Caco-2 (cell line): ENCODE measurements at regions of chr3 and their contacts with region 1.

Region 1: GRCh38 chr3:19946832-19947548 is at the start of gene RAB5A:
- DNase-seq: peak; percentile 97
- H3K4me3 ChIP-seq: peak within 1 kb of the TSS; percentile 96
- H3K4me3 Mint-ChIP-seq: peak within 1 kb of the TSS; percentile 80
- H3K27ac Mint-ChIP-seq: peak within 1 kb of the TSS; percentile 86
- H3K4me1 ChIP-seq: peaks cover 12% of the 10 kb centered on the region
- H3K4me1 Mint-ChIP-seq: peaks cover 6% of the 10 kb centered on the region
- H3K27me3 ChIP-seq: no peaks in the 10 kb centered on the region
- H3K27me3 Mint-ChIP-seq: no peaks in the 10 kb centered on the region
- CTCF ChIP-seq: no peak
- total RNA-seq, gene RAB5A: 63.1 and 69.5 TPM in 2 replicates

Region 2: DNA sequence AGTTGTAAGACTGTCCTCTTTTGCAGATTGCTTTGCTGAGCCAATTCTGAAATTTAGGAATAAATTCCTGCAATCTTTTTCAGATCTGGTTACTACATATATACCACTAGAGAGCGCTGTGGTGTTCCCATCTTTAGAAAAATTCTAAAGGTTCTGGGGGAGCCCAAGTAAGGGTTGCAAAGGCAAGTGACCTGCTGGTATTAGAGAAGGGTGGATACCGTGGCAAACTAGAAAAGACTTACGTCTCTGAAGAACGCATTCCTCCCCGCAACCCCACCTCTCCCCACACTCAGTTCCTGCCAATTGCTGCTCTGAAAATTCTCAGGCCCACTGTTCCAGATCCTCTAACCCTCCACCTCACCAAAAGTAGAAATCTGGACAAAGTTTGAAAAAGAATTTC is 61.5 kb before region 1 on chr3:
- CTCF ChIA-PET with region 1: no interaction called
- POLR2A ChIA-PET with region 1: no interaction called
- intact Hi-C with region 1: loop called (anchors 1 kb)
- DNase-seq: peak in 1 of 2 experiments; percentile 28
- H3K4me3 ChIP-seq: no peak overlapping the region
- H3K4me3 Mint-ChIP-seq: no peak overlapping the region
- H3K27ac Mint-ChIP-seq: no peak overlapping the region
- H3K4me1 ChIP-seq: no peaks in the 10 kb centered on the region
- H3K4me1 Mint-ChIP-seq: no peaks in the 10 kb centered on the region
- H3K27me3 ChIP-seq: no peaks in the 10 kb centered on the region
- H3K27me3 Mint-ChIP-seq: no peaks in the 10 kb centered on the region
- CTCF ChIP-seq: peak; percentile 40 to 65

Region 3: GRCh38 chr3:19898721-19899120 is 48.3 kb before region 1 on chr3:
- CTCF ChIA-PET with region 1: no interaction called
- POLR2A ChIA-PET with region 1: no interaction called
- intact Hi-C with region 1: loop called (anchors 2 kb)
- DNase-seq: no peak
- H3K4me3 ChIP-seq: no peak overlapping the region
- H3K4me3 Mint-ChIP-seq: peak overlapping the region; percentile 34
- H3K27ac Mint-ChIP-seq: peak overlapping the region; percentile 10
- H3K4me1 ChIP-seq: peaks cover 18% of the 10 kb centered on the region; the same call in 1 of the 2 replicates
- H3K4me1 Mint-ChIP-seq: peaks cover 12% of the 10 kb centered on the region
- H3K27me3 ChIP-seq: no peaks in the 10 kb centered on the region
- H3K27me3 Mint-ChIP-seq: no peaks in the 10 kb centered on the region
- CTCF ChIP-seq: no peak

Region 4: DNA sequence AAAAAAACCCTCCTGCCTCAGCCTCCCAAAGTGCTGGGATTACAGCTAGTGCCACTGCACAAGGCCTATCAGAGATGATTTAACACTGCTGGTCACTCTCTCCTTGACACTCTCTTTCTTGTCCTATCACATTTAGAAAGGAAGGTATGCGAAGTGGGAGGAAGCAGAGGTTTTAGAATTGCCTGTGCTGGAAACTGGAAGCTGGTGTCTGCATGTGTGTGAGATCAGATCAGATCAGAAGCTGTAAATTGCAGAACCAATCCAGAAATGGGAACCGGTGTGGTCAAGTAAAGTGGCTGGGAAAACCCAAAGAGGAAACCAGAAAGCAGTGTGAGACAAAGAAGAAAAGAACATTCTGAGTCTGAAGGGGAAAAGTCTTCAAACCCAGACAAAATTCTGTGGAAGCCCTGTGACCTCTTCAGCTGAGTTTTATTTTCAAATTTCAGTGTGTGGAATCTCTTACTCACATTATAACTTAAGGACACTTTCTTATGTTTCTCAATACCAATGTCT is 15.8 kb before region 1 on chr3:
- CTCF ChIA-PET with region 1: no interaction called
- POLR2A ChIA-PET with region 1: no interaction called
- intact Hi-C with region 1: no loop called
- DNase-seq: no peak
- H3K4me3 ChIP-seq: no peak overlapping the region
- H3K4me3 Mint-ChIP-seq: no peak overlapping the region
- H3K27ac Mint-ChIP-seq: no peak overlapping the region
- H3K4me1 ChIP-seq: no peaks in the 10 kb centered on the region
- H3K4me1 Mint-ChIP-seq: peaks cover 16% of the 10 kb centered on the region
- H3K27me3 ChIP-seq: no peaks in the 10 kb centered on the region
- H3K27me3 Mint-ChIP-seq: no peaks in the 10 kb centered on the region
- CTCF ChIP-seq: no peak

Region 5: GRCh38 chr3:20039766-20040475 is 92.9 kb after region 1 on chr3 and contains the start of gene KAT2B:
- CTCF ChIA-PET with region 1: no interaction called
- POLR2A ChIA-PET with region 1: interaction called, 5 read pairs
- intact Hi-C with region 1: loop called (anchors 2 kb)
- DNase-seq: peak; percentile 72 to 78
- H3K4me3 ChIP-seq: peak within 1 kb of the TSS; percentile 87
- H3K4me3 Mint-ChIP-seq: peak within 1 kb of the TSS; percentile 90
- H3K27ac Mint-ChIP-seq: peak within 1 kb of the TSS; percentile 59
- H3K4me1 ChIP-seq: 0 out of 2 replicates have a peak, but pooled peaks cover 7% of the 10 kb centered on the region
- H3K4me1 Mint-ChIP-seq: peaks cover 25% of the 10 kb centered on the region
- H3K27me3 ChIP-seq: no peaks in the 10 kb centered on the region
- H3K27me3 Mint-ChIP-seq: no peaks in the 10 kb centered on the region
- CTCF ChIP-seq: peak; percentile 68 to 88
- total RNA-seq, gene KAT2B: 8.1 and 9.8 TPM in 2 replicates

Region 6: DNA sequence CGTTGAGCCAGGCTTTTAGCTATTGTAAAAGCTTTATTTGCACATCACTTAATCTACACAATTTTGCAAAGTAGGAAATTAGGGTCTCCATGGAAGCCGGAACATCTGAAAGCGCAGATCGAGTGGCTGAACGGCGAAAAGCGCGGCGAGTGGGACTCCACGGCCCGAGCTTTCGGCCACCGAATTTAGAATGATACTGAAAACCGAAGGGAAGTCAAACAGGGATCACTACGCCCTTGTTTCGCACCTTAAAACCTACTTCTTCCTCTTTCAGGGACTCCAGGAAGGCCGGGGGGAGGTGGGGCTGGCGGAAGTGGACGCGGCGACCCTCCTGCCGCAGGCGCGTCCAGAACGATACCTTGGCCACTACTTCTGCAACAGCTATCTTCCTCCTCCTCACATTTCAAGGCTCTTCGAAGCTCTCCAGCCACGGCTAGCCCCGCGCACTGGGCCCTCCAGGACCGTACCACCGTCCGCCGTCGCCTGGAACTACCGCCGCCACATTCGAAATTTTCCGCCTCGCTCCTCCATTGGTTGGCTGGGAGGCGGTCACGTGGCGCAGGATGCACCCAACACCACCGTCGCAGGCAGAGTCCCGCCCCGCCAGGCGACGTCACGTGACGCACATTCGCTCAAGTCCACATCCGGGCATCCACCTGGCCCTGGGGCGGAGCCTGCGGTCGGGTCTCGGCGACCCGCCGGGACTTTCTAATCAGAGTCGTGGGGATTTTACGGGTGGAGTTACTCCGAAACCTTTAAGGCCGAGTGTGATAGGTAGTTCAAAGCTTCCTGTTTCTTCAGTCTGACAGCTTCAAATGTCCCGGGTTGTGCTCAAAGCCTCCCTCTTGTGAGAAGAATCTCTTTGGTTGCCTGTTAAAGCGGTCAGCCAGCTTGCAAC is 239.0 kb after region 1 on chr3 and contains the start of gene SGO1:
- CTCF ChIA-PET with region 1: no interaction called
- POLR2A ChIA-PET with region 1: interaction called, 3 read pairs
- intact Hi-C with region 1: loop called (anchors 5 kb)
- DNase-seq: peak; percentile 98
- H3K4me3 ChIP-seq: peak within 1 kb of the TSS; percentile 92
- H3K4me3 Mint-ChIP-seq: no peak within 1 kb of the TSS
- H3K27ac Mint-ChIP-seq: no peak within 1 kb of the TSS
- H3K4me1 ChIP-seq: peaks cover 5% of the 10 kb centered on the region; the same call in 1 of the 2 replicates
- H3K4me1 Mint-ChIP-seq: no peaks in the 10 kb centered on the region
- H3K27me3 ChIP-seq: no peaks in the 10 kb centered on the region
- H3K27me3 Mint-ChIP-seq: no peaks in the 10 kb centered on the region
- CTCF ChIP-seq: no peak
- total RNA-seq, gene SGO1: 24.2 and 27.2 TPM in 2 replicates